Heart left ventricle (tissue), 16 donors: ENCODE measurements at regions of chr13 and their contacts with region 1.

Region 1: DNA sequence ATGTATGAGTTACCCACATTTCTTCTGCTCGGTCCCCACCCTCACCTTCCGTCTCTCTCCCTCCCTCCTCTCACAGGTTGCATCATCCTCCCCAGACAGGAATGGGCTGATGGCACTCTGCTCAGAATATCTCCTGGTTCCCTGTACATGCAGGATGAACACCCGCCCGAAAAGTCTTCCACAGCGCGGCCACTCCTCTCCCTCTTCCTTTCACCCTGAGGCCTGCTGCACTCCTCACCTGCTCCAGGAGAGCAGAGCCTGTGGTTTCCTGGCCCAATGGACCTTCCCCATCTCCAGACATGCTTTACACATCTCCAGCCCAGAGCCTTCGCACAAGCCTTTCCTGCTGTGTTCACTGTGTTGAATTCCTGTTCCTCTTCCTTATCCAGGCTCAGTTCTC is 40.9 kb downstream of the GSX1 start:
- DNase-seq: no peak
- ATAC-seq: no peak
- H3K4me3 ChIP-seq: no peak overlapping the region
- H3K27ac ChIP-seq: no peak overlapping the region
- H3K4me1 ChIP-seq: peaks cover 0 to 6% (median 0%) of the 10 kb centered on the region in 12 donors
- H3K27me3 ChIP-seq: peaks cover 3 to 88% (median 42%) of the 10 kb centered on the region in 9 donors
- CTCF ChIP-seq: no peak
- POLR2A ChIP-seq: no peak

Region 2: DNA sequence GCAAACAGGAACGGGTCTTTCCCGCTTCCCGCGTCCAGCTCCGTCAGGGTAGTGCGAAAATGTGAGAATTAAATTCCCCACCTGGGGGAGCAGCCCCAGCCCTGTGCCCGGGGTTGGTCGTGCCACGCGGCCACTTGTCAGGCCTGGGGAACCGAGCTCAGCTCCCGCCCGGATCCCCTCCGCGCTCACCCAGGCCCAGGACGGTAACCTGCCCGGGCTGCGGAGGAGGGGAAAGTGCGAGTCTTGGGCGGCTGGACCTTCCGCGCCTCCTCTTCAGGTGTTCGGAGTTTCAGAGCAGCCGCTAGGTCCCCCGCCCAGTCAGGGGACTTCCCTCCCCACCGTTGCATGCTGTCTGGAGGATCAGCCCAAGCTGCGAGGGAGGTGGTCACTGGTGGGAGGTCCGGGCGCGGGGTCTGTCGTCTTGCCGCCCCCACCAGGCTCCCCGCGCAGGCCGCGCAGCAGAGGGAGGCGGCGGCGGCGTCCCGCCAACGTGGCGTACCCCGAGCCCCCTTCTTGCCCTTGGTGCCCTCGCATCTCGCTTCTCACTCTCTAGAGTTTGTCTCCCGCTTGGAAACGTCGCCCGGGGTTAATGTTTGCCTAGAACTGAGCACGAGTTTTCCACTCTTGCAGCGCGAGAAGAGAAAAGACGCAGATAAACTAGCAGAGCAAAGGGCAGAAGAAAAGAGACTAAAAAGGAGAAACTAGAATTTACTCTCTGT is 147.2 kb after region 1 on chr13:
- intact Hi-C with region 1: loop called in 9 of 10 experiments (anchors 1 to 5 kb)
- DNase-seq: no peak
- ATAC-seq: no peak
- H3K4me3 ChIP-seq: no peak overlapping the region
- H3K27ac ChIP-seq: no peak overlapping the region
- H3K4me1 ChIP-seq: peaks cover 0 to 37% (median 11%) of the 10 kb centered on the region in 12 donors
- H3K27me3 ChIP-seq: peaks cover 67 to 99% (median 89%) of the 10 kb centered on the region in 9 donors
- CTCF ChIP-seq: no peak
- POLR2A ChIP-seq: no peak